RWPE1 (cell line): ENCODE measurements at regions of chr6 and their contacts with region 1.

Region 1: GRCh38 chr6:25278914-25279747 is at the start of gene CARMIL1:
- DNase-seq: peak; percentile 93
- H3K27ac ChIP-seq: peak within 1 kb of the TSS; percentile 82
- CTCF ChIP-seq: peak; percentile 84

Region 2: DNA sequence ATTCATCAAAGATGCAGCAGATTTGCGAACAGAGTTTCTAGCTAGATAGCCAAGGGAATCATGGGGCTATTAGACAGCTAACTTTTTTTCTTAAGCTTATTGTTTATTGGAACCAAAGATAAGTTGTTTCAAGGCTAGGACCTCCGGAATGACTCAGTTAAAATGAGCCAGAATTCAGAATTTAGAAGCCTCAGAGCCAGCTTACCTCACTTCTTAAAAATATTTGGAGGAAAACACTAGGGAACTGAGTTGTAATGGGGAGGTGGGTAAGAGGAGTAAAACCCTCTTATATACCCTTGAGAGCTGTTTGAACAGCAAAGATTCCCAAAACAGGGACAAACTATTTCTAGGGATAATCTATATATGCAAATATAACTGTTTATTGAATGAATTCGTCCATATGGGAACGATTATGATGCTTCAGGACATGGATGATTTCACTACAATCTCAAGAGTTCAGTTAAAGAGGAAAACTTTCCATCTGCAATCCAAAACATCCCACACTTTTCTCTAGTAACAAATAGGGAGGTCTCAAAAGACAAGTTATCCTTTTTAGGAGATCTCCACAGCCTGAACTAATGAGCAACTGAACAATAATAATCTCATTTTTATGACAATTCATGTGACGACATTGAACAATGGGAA is 12.6 kb before region 1 on chr6:
- CTCF ChIA-PET with region 1: interaction called, 12 read pairs
- POLR2A ChIA-PET with region 1: no interaction called
- DNase-seq: no peak
- H3K27ac ChIP-seq: no peak overlapping the region
- CTCF ChIP-seq: no peak

Region 3: DNA sequence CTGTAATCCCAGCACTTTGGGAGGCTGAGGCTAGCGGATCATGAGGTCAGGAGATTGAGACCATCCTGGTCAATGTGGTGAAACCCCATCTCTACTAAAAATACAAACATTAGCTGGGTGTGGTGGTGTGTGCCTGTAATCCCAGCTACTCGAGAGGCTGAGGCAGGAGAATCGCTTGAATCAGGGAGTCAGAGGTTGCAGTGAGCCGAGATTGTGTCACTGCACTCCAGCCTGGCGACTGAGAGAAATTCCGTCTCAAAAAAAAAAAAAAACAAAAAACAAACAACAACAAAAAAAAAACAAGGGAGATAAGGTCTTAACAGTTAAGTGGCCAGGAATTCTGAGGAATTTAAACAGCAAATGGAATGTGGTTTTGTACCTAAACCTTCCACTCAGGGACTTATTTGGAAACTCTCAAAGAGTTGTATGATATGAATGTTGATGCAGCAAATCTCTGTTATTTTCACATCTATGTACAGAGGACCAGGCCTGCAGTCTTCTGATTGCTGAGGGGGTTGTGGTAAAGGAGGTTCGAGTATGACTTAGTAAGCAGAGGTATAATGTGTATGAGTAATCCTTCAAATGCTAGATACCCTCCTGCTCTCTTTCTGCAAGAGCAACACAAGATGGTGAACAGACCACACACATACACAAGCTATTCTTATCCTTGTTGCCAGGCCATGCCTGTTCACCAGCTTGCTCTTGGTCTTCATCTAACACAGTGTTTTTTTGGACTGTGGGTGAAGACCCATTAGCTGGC is 197.9 kb after region 1 on chr6:
- CTCF ChIA-PET with region 1: interaction called, 12 read pairs
- POLR2A ChIA-PET with region 1: interaction called, 3 read pairs
- DNase-seq: no peak
- H3K27ac ChIP-seq: no peak overlapping the region
- CTCF ChIP-seq: no peak

Region 4: GRCh38 chr6:25490018-25490801 is 211.1 kb after region 1 on chr6:
- CTCF ChIA-PET with region 1: interaction called, 34 read pairs
- POLR2A ChIA-PET with region 1: interaction called, 3 read pairs
- DNase-seq: peak; percentile 60
- H3K27ac ChIP-seq: no peak overlapping the region
- CTCF ChIP-seq: peak; percentile 81

Region 5: GRCh38 chr6:25556516-25556915 is 277.4 kb after region 1 on chr6:
- CTCF ChIA-PET with region 1: interaction called, 17 read pairs
- POLR2A ChIA-PET with region 1: no interaction called
- DNase-seq: peak; percentile 32
- H3K27ac ChIP-seq: no peak overlapping the region
- CTCF ChIP-seq: peak; percentile 91